Left cardiac atrium (tissue), 4 donors: ENCODE measurements at regions of chr6 and their contacts with region 1.

Region 1: GRCh38 chr6:41367700-41368099 is 32.3 kb downstream of the NCR2 start:
- DNase-seq: peak; percentile 44
- ATAC-seq: peak; percentile 67 to 73

Region 2: GRCh38 chr6:39791850-39792539 is 1575.7 kb before region 1 on chr6 and contains the start of gene DAAM2:
- intact Hi-C with region 1: no loop called
- DNase-seq: peak; percentile 68
- ATAC-seq: peak; percentile 91 to 94
- total RNA-seq, gene DAAM2: 14.7 to 15.8 TPM

Region 3: GRCh38 chr6:41424370-41425058 is 56.8 kb after region 1 on chr6:
- intact Hi-C with region 1: loop called in 1 of 2 experiments (anchors 5 kb)
- DNase-seq: peak; percentile 82
- ATAC-seq: peak; percentile 22 to 23

Region 4: DNA sequence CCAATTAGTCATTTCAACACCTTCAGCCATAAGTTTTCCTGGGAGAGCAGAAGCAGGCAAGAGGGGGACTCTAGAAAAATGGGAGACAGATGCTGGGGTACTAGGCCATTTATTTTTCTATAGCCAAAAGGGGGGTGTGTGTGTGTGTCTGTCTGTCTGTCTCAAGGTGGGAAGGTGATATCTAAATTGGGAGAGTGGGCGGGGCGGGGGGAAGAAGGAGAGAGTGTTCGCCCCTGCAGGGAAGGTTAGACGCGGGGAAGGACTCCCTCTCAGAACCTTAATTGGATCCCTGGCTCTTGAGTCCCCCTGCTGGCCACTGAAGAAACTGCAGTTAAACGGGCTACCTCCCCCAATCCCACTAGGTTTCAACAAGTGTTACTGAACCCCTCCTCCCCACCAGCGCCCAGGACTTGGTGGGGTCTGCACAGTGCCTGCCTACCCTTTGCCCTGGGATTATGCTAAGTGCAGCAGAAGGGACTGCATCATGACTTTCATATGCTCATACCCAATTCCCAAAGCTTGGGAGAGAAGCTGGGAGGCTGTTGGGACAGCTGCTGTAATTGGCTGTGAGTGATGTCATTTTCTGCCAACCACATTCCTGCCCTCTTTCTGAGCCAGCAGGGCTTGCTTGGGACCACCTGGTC is 224.3 kb after region 1 on chr6:
- intact Hi-C with region 1: loop called (anchors 2 to 5 kb)
- DNase-seq: peak; percentile 66
- ATAC-seq: peak; percentile 60 to 66

Region 5: GRCh38 chr6:41683510-41684310 is 316.0 kb after region 1 on chr6:
- intact Hi-C with region 1: loop called (anchors 2 to 5 kb)
- DNase-seq: peak; percentile 89
- ATAC-seq: peak; percentile 86 to 88

Region 6: GRCh38 chr6:41689171-41690008 is 321.7 kb after region 1 on chr6:
- intact Hi-C with region 1: loop called in 1 of 2 experiments (anchors 5 kb)
- DNase-seq: no peak
- ATAC-seq: no peak

Region 7: GRCh38 chr6:41779793-41780545 is 412.3 kb after region 1 on chr6 and contains the start of gene FRS3:
- intact Hi-C with region 1: loop called in 1 of 2 experiments (anchors 5 kb)
- DNase-seq: peak; percentile 98
- ATAC-seq: peak; percentile 92 to 96
- total RNA-seq, gene FRS3: 4.0 to 5.2 TPM